HCT116 (cell line): ENCODE measurements at regions of chr2 and their contacts with region 1.

Region 1: DNA sequence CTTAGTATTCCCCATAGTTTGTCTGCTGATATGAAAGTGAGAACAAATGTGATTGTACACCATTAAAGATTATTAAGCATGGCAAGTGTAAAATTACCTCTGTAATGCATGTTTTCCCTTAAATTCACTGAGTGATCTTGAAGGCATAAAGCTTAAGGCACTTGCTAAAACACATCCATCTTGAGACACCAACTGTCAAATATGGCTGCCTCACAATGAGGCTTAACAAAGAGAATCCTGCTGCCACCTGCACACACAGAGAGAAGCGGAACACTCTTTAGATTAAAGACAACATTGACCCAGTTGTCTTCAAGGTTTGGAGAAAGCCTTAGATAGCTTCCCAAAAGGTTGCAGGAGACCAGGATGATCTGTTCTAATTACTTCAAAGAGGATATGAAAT is 803.6 kb upstream of the GYPC start:
- DNase-seq: no peak
- ATAC-seq: no peak
- H3K4me3 ChIP-seq: no peak overlapping the region
- H3K27ac ChIP-seq: no peak overlapping the region
- H3K4me1 ChIP-seq: no peaks in the 10 kb centered on the region
- H3K27me3 ChIP-seq: no peaks in the 10 kb centered on the region
- CTCF ChIP-seq: no peak
- POLR2A ChIP-seq: no peak
- RAD21 ChIP-seq: no peak

Region 2: DNA sequence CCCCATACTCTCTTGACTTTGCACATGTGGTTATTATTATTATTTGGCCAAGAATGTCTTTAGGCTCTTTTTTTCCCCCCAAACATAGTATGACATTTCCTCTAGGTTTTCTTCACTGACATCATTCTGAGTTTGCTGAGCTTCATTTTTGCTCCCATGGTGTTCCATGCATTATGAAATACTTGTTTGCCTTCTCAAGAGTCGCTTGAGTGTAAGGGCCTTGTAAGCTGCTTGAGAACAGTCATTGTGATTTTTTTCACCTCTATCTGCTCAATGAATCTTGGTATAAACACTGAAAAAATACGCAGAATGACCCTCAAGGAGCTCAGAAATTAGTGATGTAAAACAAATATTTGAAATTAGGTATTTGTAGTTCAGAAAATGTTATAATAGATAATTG is 1138.4 kb before region 1 on chr2:
- CTCF ChIA-PET with region 1: no interaction called
- POLR2A ChIA-PET with region 1: no interaction called
- RAD21 ChIA-PET with region 1: no interaction called
- intact Hi-C with region 1: no loop called
- DNase-seq: no peak
- ATAC-seq: no peak
- H3K4me3 ChIP-seq: no peak overlapping the region
- H3K27ac ChIP-seq: no peak overlapping the region
- H3K4me1 ChIP-seq: no peaks in the 10 kb centered on the region
- H3K27me3 ChIP-seq: no peaks in the 10 kb centered on the region
- CTCF ChIP-seq: no peak
- POLR2A ChIP-seq: no peak
- RAD21 ChIP-seq: no peak

Region 3: GRCh38 chr2:125822746-125823145 is 29.6 kb before region 1 on chr2:
- CTCF ChIA-PET with region 1: no interaction called
- POLR2A ChIA-PET with region 1: no interaction called
- RAD21 ChIA-PET with region 1: no interaction called
- intact Hi-C with region 1: loop called (anchors 1 kb)
- DNase-seq: no peak
- ATAC-seq: no peak
- H3K4me3 ChIP-seq: no peak overlapping the region
- H3K27ac ChIP-seq: no peak overlapping the region
- H3K4me1 ChIP-seq: no peaks in the 10 kb centered on the region
- H3K27me3 ChIP-seq: no peaks in the 10 kb centered on the region
- CTCF ChIP-seq: no peak
- POLR2A ChIP-seq: no peak
- RAD21 ChIP-seq: no peak

Region 4: GRCh38 chr2:125870264-125870663 is 17.9 kb after region 1 on chr2:
- CTCF ChIA-PET with region 1: no interaction called
- POLR2A ChIA-PET with region 1: no interaction called
- RAD21 ChIA-PET with region 1: no interaction called
- intact Hi-C with region 1: no loop called
- DNase-seq: no peak
- ATAC-seq: no peak
- H3K4me3 ChIP-seq: no peak overlapping the region
- H3K27ac ChIP-seq: no peak overlapping the region
- H3K4me1 ChIP-seq: no peaks in the 10 kb centered on the region
- H3K27me3 ChIP-seq: no peaks in the 10 kb centered on the region
- CTCF ChIP-seq: no peak
- POLR2A ChIP-seq: no peak
- RAD21 ChIP-seq: no peak